Activated CD8-positive, alpha-beta T cell treated with anti-CD3 and anti-CD28 coated beads, Interleukin-2, amount 10 ng/mL, durations not matched to agents 7 days and 5 days (primary cell): ENCODE measurements at regions of chr22 and their contacts with region 1.

Region 1: GRCh38 chr22:30289134-30289979 is at the start of gene CASTOR1:
- DNase-seq: peak; percentile 95
- ATAC-seq: peak; percentile 83
- H3K4me3 Mint-ChIP-seq: peak within 1 kb of the TSS; percentile 80
- H3K27ac Mint-ChIP-seq: peak within 1 kb of the TSS; percentile 86
- H3K4me1 Mint-ChIP-seq: peaks cover 60% of the 10 kb centered on the region
- H3K27me3 Mint-ChIP-seq: no peaks in the 10 kb centered on the region
- total RNA-seq, gene CASTOR1: 24.5 to 25.4 TPM

Region 2: DNA sequence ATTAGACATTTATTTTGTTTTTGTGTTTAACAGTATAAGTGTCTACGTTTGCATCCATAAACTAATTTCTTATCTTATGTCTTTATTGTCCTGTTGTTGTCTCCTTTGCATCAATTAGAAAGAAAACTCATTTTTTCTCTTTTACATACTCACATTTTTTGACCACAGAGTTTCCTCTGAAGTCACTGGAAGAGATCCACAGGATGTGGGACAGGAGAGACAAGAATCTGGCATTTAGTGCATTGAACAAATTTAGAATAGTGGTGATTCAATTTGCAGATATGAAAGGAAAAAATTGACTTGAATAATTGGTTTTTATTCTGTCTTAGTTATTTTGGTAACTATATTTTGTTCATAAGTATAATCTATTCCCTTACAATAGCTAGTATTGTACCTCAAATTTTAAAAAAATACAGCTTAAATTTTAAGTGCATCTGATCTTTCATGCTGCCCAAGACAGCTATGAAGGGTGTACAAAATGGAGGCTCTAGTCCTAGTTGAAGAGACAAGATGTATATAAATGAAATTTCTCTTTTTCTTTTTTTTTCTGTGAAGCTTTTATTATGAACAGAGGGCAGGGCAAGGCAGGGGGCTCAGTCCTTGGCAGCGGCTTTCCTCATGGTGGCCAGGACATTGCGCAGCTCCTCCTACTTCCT is 184.7 kb before region 1 on chr22:
- CTCF ChIA-PET with region 1: interaction called, 48 read pairs
- POLR2A ChIA-PET with region 1: interaction called, 3 read pairs
- DNase-seq: peak; percentile 47
- ATAC-seq: peak; percentile 74
- H3K4me3 Mint-ChIP-seq: peak overlapping the region; percentile 51
- H3K27ac Mint-ChIP-seq: peak overlapping the region; percentile 83
- H3K4me1 Mint-ChIP-seq: peaks cover 76% of the 10 kb centered on the region
- H3K27me3 Mint-ChIP-seq: no peaks in the 10 kb centered on the region

Region 3: DNA sequence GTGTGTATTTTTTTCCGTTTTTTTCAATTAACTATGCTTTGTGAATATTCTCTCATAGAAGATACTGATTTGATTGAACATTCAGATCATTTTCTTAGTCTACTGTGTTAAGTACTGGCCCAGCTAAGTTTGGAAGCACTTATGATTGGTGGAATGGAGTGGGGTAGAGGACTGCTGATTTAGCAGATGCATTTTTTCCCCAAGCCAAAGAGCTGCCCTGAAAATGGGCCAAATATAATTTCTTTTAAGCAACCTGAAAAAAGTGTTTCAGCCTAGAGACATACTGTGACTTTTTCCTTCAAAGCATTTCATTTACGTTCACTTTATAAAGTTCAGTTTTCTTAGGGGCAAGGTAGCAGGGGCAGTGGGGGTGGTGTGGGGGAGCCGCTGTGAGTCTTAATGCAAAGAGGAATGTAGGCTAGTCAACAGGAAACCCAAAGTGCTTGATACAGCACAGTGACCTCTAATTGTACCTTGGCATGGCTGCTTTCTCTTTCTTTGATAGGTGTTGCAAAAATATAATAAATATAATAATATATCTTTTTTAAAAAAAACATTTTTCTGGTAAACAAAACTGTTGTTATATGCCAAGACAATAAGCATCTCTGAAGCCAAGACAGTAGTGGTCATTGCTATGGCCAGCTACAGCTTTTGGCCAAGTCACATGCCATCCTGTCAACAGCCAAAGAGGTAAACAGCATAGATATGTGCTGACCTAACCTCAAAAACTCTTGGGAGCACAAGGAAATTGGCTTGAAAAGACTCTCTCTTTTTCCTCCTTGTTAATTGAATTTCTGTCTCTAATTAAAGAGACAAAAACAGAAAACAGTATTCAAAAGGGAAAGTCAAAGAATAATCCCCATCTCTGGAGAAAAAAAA is 101.6 kb before region 1 on chr22:
- CTCF ChIA-PET with region 1: no interaction called
- POLR2A ChIA-PET with region 1: no interaction called
- DNase-seq: no peak
- ATAC-seq: no peak
- H3K4me3 Mint-ChIP-seq: no peak overlapping the region
- H3K27ac Mint-ChIP-seq: peak overlapping the region; percentile 91
- H3K4me1 Mint-ChIP-seq: peaks cover 97% of the 10 kb centered on the region
- H3K27me3 Mint-ChIP-seq: no peaks in the 10 kb centered on the region

Region 4: GRCh38 chr22:30224161-30224857 is 65.0 kb before region 1 on chr22:
- CTCF ChIA-PET with region 1: no interaction called
- POLR2A ChIA-PET with region 1: no interaction called
- DNase-seq: no peak
- ATAC-seq: no peak
- H3K4me3 Mint-ChIP-seq: no peak overlapping the region
- H3K27ac Mint-ChIP-seq: peak overlapping the region; percentile 92
- H3K4me1 Mint-ChIP-seq: peaks cover 100% of the 10 kb centered on the region
- H3K27me3 Mint-ChIP-seq: no peaks in the 10 kb centered on the region

Region 5: GRCh38 chr22:30253205-30253852 is 36.0 kb before region 1 on chr22:
- CTCF ChIA-PET with region 1: interaction called, 21 read pairs
- POLR2A ChIA-PET with region 1: no interaction called
- DNase-seq: no peak
- ATAC-seq: no peak
- H3K4me3 Mint-ChIP-seq: peak overlapping the region; percentile 12
- H3K27ac Mint-ChIP-seq: peak overlapping the region; percentile 76
- H3K4me1 Mint-ChIP-seq: peaks cover 93% of the 10 kb centered on the region
- H3K27me3 Mint-ChIP-seq: no peaks in the 10 kb centered on the region

Region 6: DNA sequence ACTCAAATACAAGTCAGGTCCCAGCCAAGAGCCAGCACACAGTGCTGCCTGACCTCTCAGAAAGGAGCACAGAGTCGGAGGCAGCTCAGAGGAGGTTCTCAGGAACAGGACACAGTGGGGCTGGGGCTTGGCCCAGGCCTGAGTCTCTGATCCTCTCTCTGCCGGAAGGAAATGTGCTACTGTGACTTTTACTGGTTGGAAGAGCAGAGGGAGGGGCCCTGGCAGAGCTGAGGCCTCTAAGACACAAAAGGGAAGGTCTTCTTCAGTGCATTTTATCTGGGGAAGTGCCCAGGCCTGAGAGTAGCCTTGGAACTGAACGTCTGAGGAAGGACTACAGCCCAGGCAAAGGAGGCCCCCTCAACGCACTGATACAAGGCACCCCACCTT is 16.2 kb after region 1 on chr22:
- CTCF ChIA-PET with region 1: interaction called, 184 read pairs
- POLR2A ChIA-PET with region 1: interaction called, 117 read pairs
- DNase-seq: peak; percentile 81
- ATAC-seq: peak; percentile 79
- H3K4me3 Mint-ChIP-seq: peak overlapping the region; percentile 81
- H3K27ac Mint-ChIP-seq: peak overlapping the region; percentile 93
- H3K4me1 Mint-ChIP-seq: peaks cover 100% of the 10 kb centered on the region
- H3K27me3 Mint-ChIP-seq: no peaks in the 10 kb centered on the region

Region 7: DNA sequence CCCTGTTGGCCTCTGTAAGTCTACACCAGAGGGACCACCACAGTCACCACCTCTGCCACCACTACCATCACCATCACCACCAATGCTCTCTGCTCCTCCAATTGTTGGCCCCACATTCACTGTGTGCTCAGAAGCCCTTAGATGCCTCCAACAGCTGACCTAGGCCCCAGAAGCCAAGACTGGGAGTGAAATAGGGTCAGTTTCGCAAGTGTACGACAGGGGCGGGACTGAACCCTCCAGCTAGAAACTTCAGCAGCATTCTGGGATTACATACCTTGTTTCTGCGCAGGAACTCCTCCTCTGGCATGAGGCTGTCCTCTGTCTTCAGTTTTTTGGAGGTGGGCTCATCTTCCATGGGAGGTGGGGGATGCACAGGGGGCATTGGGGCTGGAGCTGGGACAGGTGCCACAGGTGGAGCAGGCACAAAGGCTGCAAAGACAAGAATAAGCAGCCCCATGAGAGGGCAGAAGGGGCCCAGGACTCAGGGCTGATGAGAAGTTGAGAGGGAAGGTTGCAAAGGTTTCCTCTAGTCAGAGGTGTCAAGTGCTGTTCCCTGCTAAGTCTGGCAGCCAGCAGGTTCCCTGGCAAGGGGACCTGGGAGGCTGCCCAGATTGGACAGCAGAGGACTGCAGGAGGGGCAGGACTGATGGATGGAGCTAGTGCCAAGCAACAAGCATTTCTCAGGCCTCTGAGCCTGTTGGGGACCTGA is 47.5 kb after region 1 on chr22:
- CTCF ChIA-PET with region 1: interaction called, 18 read pairs
- POLR2A ChIA-PET with region 1: interaction called, 3 read pairs
- DNase-seq: no peak
- ATAC-seq: no peak
- H3K4me3 Mint-ChIP-seq: no peak overlapping the region
- H3K27ac Mint-ChIP-seq: peak overlapping the region; percentile 2
- H3K4me1 Mint-ChIP-seq: peaks cover 26% of the 10 kb centered on the region
- H3K27me3 Mint-ChIP-seq: no peaks in the 10 kb centered on the region

Region 8: DNA sequence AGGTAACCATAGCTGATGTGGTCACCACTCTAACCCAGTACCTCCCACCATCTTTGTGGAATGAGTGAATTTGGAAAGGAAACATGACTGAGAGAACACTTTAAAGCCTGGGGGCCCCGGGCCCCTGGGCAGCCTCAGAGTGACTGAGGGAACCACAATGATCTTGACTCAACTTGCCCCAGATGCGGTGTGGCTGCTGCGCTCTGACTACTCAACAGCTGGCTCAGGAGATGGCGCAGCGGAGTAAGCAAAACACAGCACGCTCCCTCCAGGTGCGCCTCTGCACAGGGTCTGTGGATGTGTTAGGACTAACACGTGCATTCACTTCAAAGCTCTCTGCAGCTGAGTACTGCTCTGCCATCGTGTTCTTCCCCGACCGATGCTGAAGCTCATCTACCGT is 91.9 kb after region 1 on chr22:
- CTCF ChIA-PET with region 1: interaction called, 346 read pairs
- POLR2A ChIA-PET with region 1: interaction called, 32 read pairs
- DNase-seq: no peak
- ATAC-seq: peak; percentile 18
- H3K4me3 Mint-ChIP-seq: no peak overlapping the region
- H3K27ac Mint-ChIP-seq: no peak overlapping the region
- H3K4me1 Mint-ChIP-seq: peaks cover 5% of the 10 kb centered on the region
- H3K27me3 Mint-ChIP-seq: no peaks in the 10 kb centered on the region